ENCODE measurements at regions of chr15 and their contacts with region 1.

Region 1: GRCh38 chr15:31215490-31216214 is 111.0 kb upstream of the KLF13 start:
- DNase-seq: peak; percentile 95
- ATAC-seq: peak; percentile 84
- H3K4me3 ChIP-seq: peak overlapping the region; percentile 63
- H3K27ac ChIP-seq: peak overlapping the region; percentile 99
- H3K4me1 ChIP-seq: peaks cover 36% of the 10 kb centered on the region
- H3K27me3 ChIP-seq: no peaks in the 10 kb centered on the region
- CTCF ChIP-seq: peak; percentile 89

Region 2: DNA sequence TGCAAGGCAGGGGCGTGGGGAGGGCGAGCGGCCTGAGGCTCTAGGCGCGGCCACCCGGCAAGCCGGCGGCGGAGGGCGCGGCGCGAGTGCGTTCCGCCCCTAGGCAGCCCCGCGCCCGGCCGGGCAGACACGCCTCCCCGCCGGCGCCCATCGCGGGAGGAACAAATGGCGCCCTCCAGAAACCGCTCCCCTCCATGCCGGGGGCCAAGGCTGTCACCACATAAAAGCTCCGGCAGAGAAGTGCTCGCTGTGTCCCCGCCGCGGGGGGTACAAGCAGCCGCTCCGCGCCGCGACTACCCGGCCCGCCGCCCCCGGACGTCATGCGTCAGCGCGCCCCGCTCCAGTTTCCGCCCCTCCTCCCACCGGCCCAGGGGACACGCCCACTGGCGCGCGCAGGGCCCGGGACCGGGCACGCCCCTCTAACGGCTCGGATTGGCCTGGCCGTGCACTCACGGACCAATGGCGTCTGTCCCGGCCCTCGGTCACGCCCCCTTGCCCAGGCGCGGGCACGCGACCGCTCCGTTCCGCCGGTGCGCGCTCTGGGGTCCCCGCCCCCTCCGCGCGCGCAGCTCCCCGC is 110.6 kb after region 1 on chr15:
- intact Hi-C with region 1: loop called (anchors 10 kb)
- DNase-seq: peak; percentile 100
- ATAC-seq: peak; percentile 88
- H3K4me3 ChIP-seq: peak overlapping the region; percentile 88
- H3K27ac ChIP-seq: peak overlapping the region; percentile 100
- H3K4me1 ChIP-seq: peaks cover 25% of the 10 kb centered on the region
- H3K27me3 ChIP-seq: no peaks in the 10 kb centered on the region
- CTCF ChIP-seq: peak; percentile 4

Region 3: GRCh38 chr15:31391687-31392671 is 176.3 kb after region 1 on chr15:
- intact Hi-C with region 1: no loop called
- DNase-seq: peak; percentile 95
- ATAC-seq: peak; percentile 86
- H3K4me3 ChIP-seq: peak overlapping the region; percentile 82
- H3K27ac ChIP-seq: peak overlapping the region; percentile 95
- H3K4me1 ChIP-seq: peaks cover 15% of the 10 kb centered on the region
- H3K27me3 ChIP-seq: no peaks in the 10 kb centered on the region
- CTCF ChIP-seq: no peak